GM12878 (cell line): ENCODE measurements at regions of chr6 and their contacts with region 1.

Region 1: GRCh38 chr6:143510991-143511891 is at the start of gene FUCA2:
- DNase-seq: peak; percentile 51
- ATAC-seq: peak; percentile 80
- H3K4me3 ChIP-seq: peak within 1 kb of the TSS; percentile 70
- H3K27ac ChIP-seq: peak within 1 kb of the TSS; percentile 83
- H3K4me1 ChIP-seq: peaks cover 26% of the 10 kb centered on the region
- H3K27me3 ChIP-seq: no peaks in the 10 kb centered on the region
- CTCF ChIP-seq: no peak
- EP300 ChIP-seq: no peak
- POLR2A ChIP-seq: peak; percentile 87
- RAD21 ChIP-seq: no peak
- polyA plus RNA-seq, gene FUCA2: 5.7 to 11.8 TPM

Region 2: DNA sequence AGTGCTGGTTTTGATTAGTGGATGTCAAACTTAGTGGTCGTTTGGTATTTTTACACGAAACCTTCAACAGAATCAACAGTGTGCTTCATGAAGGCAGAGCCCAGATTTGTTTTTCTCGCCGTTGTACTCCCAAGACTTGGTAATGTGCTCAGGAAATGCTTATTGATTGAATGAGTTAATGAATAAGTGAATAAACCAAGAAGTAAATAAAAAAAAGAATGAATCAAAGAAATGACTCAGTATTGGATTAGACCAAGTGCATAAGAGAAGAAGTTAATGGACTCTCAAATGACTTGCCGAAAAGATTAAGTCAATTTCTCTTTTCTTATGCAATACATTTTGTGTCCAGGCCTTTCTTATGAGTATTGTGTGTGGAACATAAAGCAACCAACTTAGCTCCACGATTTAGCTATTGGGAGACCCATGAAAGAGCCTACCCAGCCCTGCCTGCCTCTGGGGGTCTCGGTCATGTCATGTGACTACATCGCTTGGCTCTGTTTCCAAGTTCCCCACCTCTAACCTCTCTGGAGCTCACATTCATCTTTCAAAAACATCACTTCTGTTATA is 10.9 kb after region 1 on chr6:
- CTCF ChIA-PET with region 1: interaction called, 23 read pairs
- POLR2A ChIA-PET with region 1: no interaction called
- RAD21 ChIA-PET with region 1: interaction called, 5 read pairs
- SMC1A ChIA-PET with region 1: interaction called, 3 read pairs
- in situ Hi-C with region 1: no loop called
- intact Hi-C with region 1: no loop called
- DNase-seq: no peak
- ATAC-seq: no peak
- H3K4me3 ChIP-seq: no peak overlapping the region
- H3K27ac ChIP-seq: no peak overlapping the region
- H3K4me1 ChIP-seq: peaks cover 4% of the 10 kb centered on the region; the same call in 1 of the 2 replicates
- H3K27me3 ChIP-seq: no peaks in the 10 kb centered on the region
- CTCF ChIP-seq: no peak
- EP300 ChIP-seq: no peak
- POLR2A ChIP-seq: no peak
- RAD21 ChIP-seq: no peak

Region 3: DNA sequence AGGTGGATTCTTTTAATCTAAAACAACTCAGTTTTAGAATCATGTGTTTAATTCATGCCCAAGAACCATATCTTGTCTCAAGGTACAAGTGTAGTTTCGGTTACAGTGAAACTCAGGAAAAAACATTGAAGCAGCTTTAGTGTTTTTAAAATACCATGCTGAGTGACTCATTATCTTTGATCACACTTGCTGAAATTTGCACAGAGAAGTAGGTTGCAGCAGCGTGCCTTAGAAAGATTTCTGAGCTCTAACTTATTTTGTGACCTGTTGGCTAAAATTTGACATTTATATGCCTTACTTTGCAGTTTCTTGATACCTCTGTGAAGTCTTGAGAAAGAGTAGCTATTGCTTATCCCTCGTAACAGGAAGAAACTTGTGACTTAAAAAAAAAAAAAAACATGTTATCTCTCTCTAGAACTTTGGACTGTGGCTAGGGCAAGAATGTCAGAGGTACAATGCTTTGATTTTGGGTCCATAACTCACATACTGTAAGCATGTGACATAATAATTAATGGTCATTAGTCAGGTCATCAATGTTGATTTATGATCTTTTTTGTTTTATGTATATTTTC is 34.8 kb after region 1 on chr6:
- CTCF ChIA-PET with region 1: interaction called, 16 read pairs
- POLR2A ChIA-PET with region 1: no interaction called
- RAD21 ChIA-PET with region 1: interaction called, 3 read pairs
- SMC1A ChIA-PET with region 1: interaction called, 3 read pairs
- in situ Hi-C with region 1: no loop called
- intact Hi-C with region 1: no loop called
- DNase-seq: no peak
- ATAC-seq: no peak
- H3K4me3 ChIP-seq: no peak overlapping the region
- H3K27ac ChIP-seq: no peak overlapping the region
- H3K4me1 ChIP-seq: peaks cover 42% of the 10 kb centered on the region
- H3K27me3 ChIP-seq: no peaks in the 10 kb centered on the region
- CTCF ChIP-seq: no peak
- EP300 ChIP-seq: no peak
- POLR2A ChIP-seq: no peak
- RAD21 ChIP-seq: no peak

Region 4: DNA sequence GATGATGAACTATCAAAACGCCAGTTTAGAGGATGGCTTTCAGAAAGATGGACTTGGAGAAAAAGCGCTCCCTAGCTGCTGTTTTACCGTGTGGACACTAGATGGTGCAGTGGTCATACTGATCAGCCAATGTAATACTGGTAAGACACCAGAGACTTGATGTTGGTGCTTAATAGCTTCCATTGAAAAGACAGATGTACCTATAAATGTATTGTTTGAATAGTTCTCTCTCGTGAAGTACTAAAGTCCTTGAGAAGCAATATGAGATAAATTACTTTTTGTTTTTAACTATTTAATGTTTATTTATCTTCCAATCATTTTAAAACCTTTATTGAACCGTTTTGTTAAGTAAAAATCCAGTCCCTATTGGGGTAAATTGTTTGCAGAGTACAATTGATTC is 64.2 kb after region 1 on chr6:
- CTCF ChIA-PET with region 1: interaction called, 41 read pairs
- POLR2A ChIA-PET with region 1: no interaction called
- RAD21 ChIA-PET with region 1: interaction called, 12 read pairs
- SMC1A ChIA-PET with region 1: interaction called, 35 read pairs
- in situ Hi-C with region 1: no loop called
- intact Hi-C with region 1: loop called (anchors 2 kb)
- DNase-seq: peak; percentile 27
- ATAC-seq: peak; percentile 94
- H3K4me3 ChIP-seq: no peak overlapping the region
- H3K27ac ChIP-seq: no peak overlapping the region
- H3K4me1 ChIP-seq: no peaks in the 10 kb centered on the region
- H3K27me3 ChIP-seq: no peaks in the 10 kb centered on the region; a peak in 2 of 4 replicates
- CTCF ChIP-seq: peak; percentile 63 to 81 (median 79)
- EP300 ChIP-seq: no peak
- POLR2A ChIP-seq: no peak
- RAD21 ChIP-seq: peak; percentile 89

Region 5: GRCh38 chr6:143647191-143647590 is 135.9 kb after region 1 on chr6:
- CTCF ChIA-PET with region 1: no interaction called
- POLR2A ChIA-PET with region 1: no interaction called
- RAD21 ChIA-PET with region 1: no interaction called
- SMC1A ChIA-PET with region 1: no interaction called
- in situ Hi-C with region 1: no loop called
- intact Hi-C with region 1: no loop called
- DNase-seq: no peak
- ATAC-seq: peak; percentile 34; the same call in 2 of the 3 replicates
- H3K4me3 ChIP-seq: no peak overlapping the region
- H3K27ac ChIP-seq: no peak overlapping the region
- H3K4me1 ChIP-seq: peaks cover 3% of the 10 kb centered on the region; the same call in 1 of the 2 replicates
- H3K27me3 ChIP-seq: no peaks in the 10 kb centered on the region
- CTCF ChIP-seq: no peak
- EP300 ChIP-seq: no peak
- POLR2A ChIP-seq: no peak
- RAD21 ChIP-seq: no peak